ENCODE measurements at regions of chr5 and their contacts with region 1.

Region 1: DNA sequence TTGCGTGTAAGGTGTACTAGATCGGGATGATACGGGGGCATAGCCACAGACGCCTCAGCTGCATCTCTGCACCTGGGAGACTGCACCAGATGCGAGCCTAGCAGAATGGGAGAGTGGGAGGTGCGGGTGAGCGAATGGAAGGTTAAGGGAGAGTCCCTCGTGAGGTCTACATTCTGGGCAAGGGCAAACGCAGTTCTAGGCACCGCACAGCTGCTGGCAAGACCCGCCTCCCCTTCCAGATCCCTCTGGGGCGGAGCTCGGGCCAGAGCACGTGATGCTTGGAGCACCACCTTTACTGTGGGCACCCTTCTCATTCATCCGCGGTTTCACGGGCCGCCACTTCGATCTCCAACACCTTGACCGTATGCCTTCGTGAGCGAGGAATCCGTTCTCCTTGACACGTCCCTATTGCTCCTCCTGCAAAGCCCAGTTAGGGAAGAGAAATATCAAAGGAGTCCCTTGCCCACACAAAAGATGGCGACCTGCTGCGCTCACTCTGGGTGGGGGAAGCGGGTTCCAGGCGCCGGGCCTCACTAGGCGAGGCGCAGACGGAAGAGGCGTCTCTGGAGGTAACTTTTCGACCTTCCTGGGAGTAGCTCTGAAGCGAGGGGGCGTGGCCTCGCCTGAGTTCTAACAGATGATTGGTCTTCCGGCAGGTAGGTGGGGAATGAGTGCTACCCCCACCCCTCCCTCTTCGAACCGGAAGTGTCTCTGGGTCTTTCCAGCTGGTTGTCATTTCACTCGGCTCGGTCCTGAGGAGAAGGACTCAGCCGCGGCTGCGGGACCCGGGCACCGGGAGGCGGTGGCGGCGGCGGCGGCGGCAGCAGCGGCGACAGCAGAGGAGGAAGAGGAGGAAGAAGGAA is at the start of gene CPEB4:
- DNase-seq: peak; percentile 87
- ATAC-seq: peak; percentile 91
- H3K4me3 Mint-ChIP-seq: peak within 1 kb of the TSS; percentile 100
- H3K27ac Mint-ChIP-seq: peak within 1 kb of the TSS; percentile 100
- H3K4me1 Mint-ChIP-seq: peaks cover 87% of the 10 kb centered on the region
- H3K27me3 Mint-ChIP-seq: no peaks in the 10 kb centered on the region
- CTCF ChIP-seq: no peak
- total RNA-seq, gene CPEB4: 26.9 and 30.0 TPM in 2 replicates

Region 2: GRCh38 chr5:172764849-172765765 is 1122.7 kb before region 1 on chr5:
- CTCF ChIA-PET with region 1: no interaction called
- POLR2A ChIA-PET with region 1: no interaction called
- intact Hi-C with region 1: loop called (anchors 5 kb)
- DNase-seq: peak; percentile 86
- ATAC-seq: peak; percentile 78
- H3K4me3 Mint-ChIP-seq: peak overlapping the region; percentile 84
- H3K27ac Mint-ChIP-seq: peak overlapping the region; percentile 95
- H3K4me1 Mint-ChIP-seq: peaks cover 64% of the 10 kb centered on the region
- H3K27me3 Mint-ChIP-seq: no peaks in the 10 kb centered on the region
- CTCF ChIP-seq: no peak

Region 3: GRCh38 chr5:173679909-173680630 is 207.8 kb before region 1 on chr5:
- CTCF ChIA-PET with region 1: no interaction called
- POLR2A ChIA-PET with region 1: interaction called, 6 read pairs
- intact Hi-C with region 1: loop called (anchors 2 kb)
- DNase-seq: no peak
- ATAC-seq: peak; percentile 54
- H3K4me3 Mint-ChIP-seq: peak overlapping the region; percentile 44
- H3K27ac Mint-ChIP-seq: peak overlapping the region; percentile 86
- H3K4me1 Mint-ChIP-seq: peaks cover 47% of the 10 kb centered on the region
- H3K27me3 Mint-ChIP-seq: no peaks in the 10 kb centered on the region
- CTCF ChIP-seq: no peak

Region 4: DNA sequence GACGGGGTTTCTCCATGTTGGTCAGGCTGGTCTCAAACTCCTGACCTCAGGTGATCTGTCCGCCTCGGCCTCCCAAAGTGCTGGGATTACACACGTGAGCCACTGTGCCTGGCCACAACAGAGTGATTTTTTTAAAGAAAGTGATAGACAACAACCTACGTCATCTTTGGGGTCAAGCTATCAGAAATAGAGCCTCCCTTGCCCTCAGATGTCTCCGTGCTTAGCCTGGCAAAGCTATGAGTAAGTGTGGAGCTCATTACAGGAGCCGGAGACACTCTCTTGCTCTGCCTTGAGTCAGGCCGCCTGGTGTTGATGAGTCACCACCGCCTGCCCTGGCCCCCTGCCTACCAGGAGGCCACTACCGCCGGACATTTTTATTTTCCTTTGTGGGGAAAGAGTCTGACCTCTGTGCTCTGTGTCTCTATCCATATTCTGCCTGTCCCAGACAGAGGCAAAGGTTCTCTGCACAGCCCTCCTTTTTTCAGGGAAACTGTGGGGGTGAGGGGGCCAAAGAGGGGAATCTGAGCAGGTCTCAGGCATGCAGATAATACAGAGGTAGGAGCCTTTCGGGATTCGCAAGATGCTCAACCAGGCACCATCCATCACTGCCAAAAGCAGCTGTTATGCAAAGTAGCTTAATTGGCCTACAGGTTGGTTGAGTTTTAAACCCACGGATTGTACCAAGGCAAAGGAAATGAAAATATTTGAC is 123.4 kb before region 1 on chr5:
- CTCF ChIA-PET with region 1: no interaction called
- POLR2A ChIA-PET with region 1: no interaction called
- intact Hi-C with region 1: no loop called
- DNase-seq: no peak
- ATAC-seq: no peak
- H3K4me3 Mint-ChIP-seq: no peak overlapping the region
- H3K27ac Mint-ChIP-seq: no peak overlapping the region
- H3K4me1 Mint-ChIP-seq: peaks cover 22% of the 10 kb centered on the region
- H3K27me3 Mint-ChIP-seq: peaks cover 6% of the 10 kb centered on the region
- CTCF ChIP-seq: no peak

Region 5: GRCh38 chr5:173781814-173782670 is 105.8 kb before region 1 on chr5:
- CTCF ChIA-PET with region 1: interaction called, 18 read pairs
- POLR2A ChIA-PET with region 1: interaction called, 17 read pairs
- intact Hi-C with region 1: loop called (anchors 1 kb)
- DNase-seq: peak; percentile 50
- ATAC-seq: peak; percentile 77
- H3K4me3 Mint-ChIP-seq: peak overlapping the region; percentile 66
- H3K27ac Mint-ChIP-seq: peak overlapping the region; percentile 78
- H3K4me1 Mint-ChIP-seq: peaks cover 61% of the 10 kb centered on the region
- H3K27me3 Mint-ChIP-seq: no peaks in the 10 kb centered on the region
- CTCF ChIP-seq: no peak

Region 6: GRCh38 chr5:173823711-173824528 is 63.9 kb before region 1 on chr5:
- CTCF ChIA-PET with region 1: interaction called, 7 read pairs
- POLR2A ChIA-PET with region 1: interaction called, 25 read pairs
- intact Hi-C with region 1: loop called (anchors 1 kb)
- DNase-seq: no peak
- ATAC-seq: no peak
- H3K4me3 Mint-ChIP-seq: no peak overlapping the region
- H3K27ac Mint-ChIP-seq: peak overlapping the region; percentile 42
- H3K4me1 Mint-ChIP-seq: peaks cover 86% of the 10 kb centered on the region
- H3K27me3 Mint-ChIP-seq: no peaks in the 10 kb centered on the region
- CTCF ChIP-seq: no peak

Region 7: GRCh38 chr5:173917788-173918786 is 30.2 kb after region 1 on chr5:
- CTCF ChIA-PET with region 1: interaction called, 5 read pairs
- POLR2A ChIA-PET with region 1: interaction called, 42 read pairs
- intact Hi-C with region 1: loop called (anchors 1 kb)
- DNase-seq: no peak
- ATAC-seq: peak; percentile 92
- H3K4me3 Mint-ChIP-seq: no peak overlapping the region
- H3K27ac Mint-ChIP-seq: no peak overlapping the region
- H3K4me1 Mint-ChIP-seq: peaks cover 24% of the 10 kb centered on the region
- H3K27me3 Mint-ChIP-seq: no peaks in the 10 kb centered on the region
- CTCF ChIP-seq: no peak

Region 8: DNA sequence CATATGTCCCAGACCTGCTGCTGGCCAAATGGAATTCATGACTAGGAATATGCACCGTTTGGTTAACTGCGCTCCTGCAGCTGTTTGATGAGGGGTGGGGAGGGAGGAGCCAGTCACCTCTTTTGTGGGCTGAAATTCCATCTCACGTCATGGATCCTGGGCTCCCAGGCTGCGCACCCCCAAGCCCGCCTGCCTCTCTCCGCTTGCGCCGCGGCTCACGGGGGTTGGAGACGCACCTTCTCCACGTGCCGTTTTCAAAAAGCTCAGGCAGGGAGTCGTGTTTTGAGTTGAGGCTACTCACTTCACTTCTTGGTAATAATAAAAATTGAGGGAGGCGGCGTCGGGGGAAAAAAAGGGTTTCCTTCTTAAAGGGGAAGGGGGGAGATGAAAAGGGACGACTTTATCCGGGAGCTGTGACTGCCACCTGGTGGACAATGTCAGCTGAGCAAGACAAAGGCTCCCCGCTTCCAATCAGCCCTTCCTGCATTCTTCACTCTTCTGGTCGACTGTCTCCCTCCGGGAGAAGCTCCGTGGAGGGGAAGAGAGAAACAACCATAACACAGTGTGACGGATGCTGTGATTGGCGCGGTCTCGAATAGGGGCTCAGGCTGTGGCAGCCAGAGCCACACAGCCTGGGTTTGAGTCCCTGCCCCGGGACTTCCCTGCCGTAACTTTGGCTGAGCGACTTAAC is 85.2 kb after region 1 on chr5:
- CTCF ChIA-PET with region 1: interaction called, 3 read pairs
- POLR2A ChIA-PET with region 1: no interaction called
- intact Hi-C with region 1: loop called (anchors 2 kb)
- DNase-seq: peak; percentile 65
- ATAC-seq: peak; percentile 90
- H3K4me3 Mint-ChIP-seq: peak overlapping the region; percentile 78
- H3K27ac Mint-ChIP-seq: no peak overlapping the region
- H3K4me1 Mint-ChIP-seq: peaks cover 10% of the 10 kb centered on the region
- H3K27me3 Mint-ChIP-seq: peaks cover 25% of the 10 kb centered on the region
- CTCF ChIP-seq: peak; percentile 55